Activated CD8-positive, alpha-beta memory T cell treated with anti-CD3 and anti-CD28 coated beads, Interleukin-2, amount 10 ng/mL, durations not matched to agents 7 days and 5 days (primary cell): ENCODE measurements at regions of chr14 and their contacts with region 1.

Region 1: DNA sequence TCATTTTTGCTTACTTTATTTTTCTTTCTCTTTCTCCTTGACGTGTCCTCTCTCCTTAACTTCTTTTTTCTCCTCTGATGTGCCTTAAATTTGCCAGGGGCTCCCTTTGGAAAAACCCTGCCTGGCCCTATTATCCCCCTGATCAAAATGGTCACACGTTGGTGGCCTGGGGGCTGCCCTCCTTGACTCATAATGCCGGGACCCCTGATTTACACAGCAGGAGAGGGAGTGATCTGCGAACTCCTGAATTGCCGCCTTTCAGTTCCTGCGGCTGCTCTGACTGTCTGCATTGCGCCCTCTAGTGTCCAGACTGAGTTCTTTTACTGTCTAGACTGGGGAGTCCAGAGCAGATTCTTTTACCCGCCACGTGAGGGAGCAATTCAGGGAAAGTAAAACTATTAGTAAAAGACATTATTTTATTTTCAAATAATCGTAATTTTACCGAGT is 44.8 kb upstream of the GZMB start:
- DNase-seq: peak; percentile 91
- ATAC-seq: peak; percentile 73
- H3K4me3 Mint-ChIP-seq: peak overlapping the region; percentile 72
- H3K27ac Mint-ChIP-seq: peak overlapping the region; percentile 90
- H3K4me1 Mint-ChIP-seq: peaks cover 70% of the 10 kb centered on the region
- H3K27me3 Mint-ChIP-seq: no peaks in the 10 kb centered on the region

Region 2: DNA sequence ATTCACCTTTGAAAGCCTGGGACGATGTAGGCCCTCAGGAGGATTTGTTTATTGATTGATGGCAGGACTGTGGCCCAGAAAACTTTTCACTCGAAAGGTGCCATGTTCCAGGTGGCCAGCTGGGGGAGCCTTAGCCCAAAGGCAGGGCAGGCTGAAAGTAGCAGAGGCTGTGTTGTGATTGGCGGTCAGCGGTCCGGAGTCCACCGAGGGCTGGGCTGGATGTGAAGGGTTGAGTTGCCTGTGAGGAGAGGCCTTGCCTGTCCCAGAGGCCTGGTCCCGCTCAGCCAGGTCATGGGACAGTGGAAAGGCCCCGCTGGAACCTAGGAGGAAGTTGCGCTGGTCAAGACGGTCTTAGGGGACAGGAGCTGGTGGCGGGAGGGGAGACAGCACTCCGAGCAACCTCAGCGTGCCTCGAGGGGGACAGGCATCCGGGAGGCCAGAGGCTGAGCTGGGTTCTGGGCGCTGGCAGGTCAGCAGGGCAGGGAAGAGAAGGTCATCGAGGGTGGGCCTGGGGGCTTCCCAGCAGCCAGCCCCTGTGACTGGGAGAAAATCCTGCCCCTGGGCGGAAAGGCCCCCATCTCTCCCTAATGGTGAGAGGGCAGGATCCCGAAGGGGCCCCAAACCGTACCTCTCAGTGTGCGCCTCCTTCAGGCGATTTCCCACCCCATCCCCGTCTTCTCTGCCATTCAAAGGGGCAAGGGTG is 197.1 kb before region 1 on chr14:
- CTCF ChIA-PET with region 1: interaction called, 26 read pairs
- DNase-seq: peak; percentile 71
- ATAC-seq: peak; percentile 82
- H3K4me3 Mint-ChIP-seq: peak overlapping the region; percentile 38
- H3K27ac Mint-ChIP-seq: peak overlapping the region; percentile 71
- H3K4me1 Mint-ChIP-seq: peaks cover 20% of the 10 kb centered on the region
- H3K27me3 Mint-ChIP-seq: no peaks in the 10 kb centered on the region

Region 3: GRCh38 chr14:24556756-24557155 is 122.1 kb before region 1 on chr14:
- CTCF ChIA-PET with region 1: no interaction called
- DNase-seq: no peak
- ATAC-seq: no peak
- H3K4me3 Mint-ChIP-seq: no peak overlapping the region
- H3K27ac Mint-ChIP-seq: no peak overlapping the region
- H3K4me1 Mint-ChIP-seq: no peaks in the 10 kb centered on the region
- H3K27me3 Mint-ChIP-seq: peaks cover 7% of the 10 kb centered on the region

Region 4: GRCh38 chr14:24761141-24761540 is 82.3 kb after region 1 on chr14:
- CTCF ChIA-PET with region 1: no interaction called
- DNase-seq: no peak
- ATAC-seq: no peak
- H3K4me3 Mint-ChIP-seq: no peak overlapping the region
- H3K27ac Mint-ChIP-seq: no peak overlapping the region
- H3K4me1 Mint-ChIP-seq: no peaks in the 10 kb centered on the region
- H3K27me3 Mint-ChIP-seq: peaks cover 27% of the 10 kb centered on the region